Body of pancreas (tissue), 4 donors: ENCODE measurements at regions of chr15 and their contacts with region 1.

Region 1: DNA sequence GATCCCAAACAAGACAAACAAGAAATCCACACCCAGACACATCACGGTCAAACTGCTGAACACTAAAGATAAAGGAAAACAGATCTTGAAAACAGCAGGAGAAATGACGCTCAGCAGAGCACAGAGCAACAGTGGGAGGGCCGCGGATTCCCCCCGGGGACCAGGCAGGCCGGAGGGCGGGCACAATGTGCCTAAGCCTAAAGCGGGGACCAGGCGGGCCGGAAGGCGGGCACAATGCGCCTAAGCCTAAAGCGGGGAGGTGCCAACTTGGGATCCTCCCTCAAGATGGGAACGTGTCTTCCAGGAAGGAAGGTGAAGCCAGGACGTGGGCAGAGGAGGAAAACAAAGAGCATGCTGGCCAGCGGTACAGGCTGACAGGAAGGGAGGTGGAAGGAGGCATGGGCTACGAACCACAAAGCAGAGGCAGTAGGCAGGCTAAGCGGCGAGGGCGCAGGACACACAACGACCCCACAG is 31.1 kb downstream of the CYFIP1 start:
- DNase-seq: no peak
- ATAC-seq: peak; percentile 28
- H3K4me3 ChIP-seq: no peak overlapping the region
- H3K27ac ChIP-seq: peak overlapping the region in 1 of 4 donors; percentile 3
- H3K4me1 ChIP-seq: peaks cover 44% of the 10 kb centered on the region
- H3K27me3 ChIP-seq: no peaks in the 10 kb centered on the region
- CTCF ChIP-seq: no peak
- POLR2A ChIP-seq: no peak

Region 2: GRCh38 chr15:22872936-22873701 is 76.0 kb before region 1 on chr15:
- intact Hi-C with region 1: no loop called
- DNase-seq: no peak
- ATAC-seq: no peak
- H3K4me3 ChIP-seq: no peak overlapping the region
- H3K27ac ChIP-seq: peak overlapping the region in 1 of 4 donors; percentile 23
- H3K4me1 ChIP-seq: no peaks in the 10 kb centered on the region
- H3K27me3 ChIP-seq: no peaks in the 10 kb centered on the region
- CTCF ChIP-seq: no peak
- POLR2A ChIP-seq: no peak

Region 3: GRCh38 chr15:22989576-22990477 is 40.7 kb after region 1 on chr15:
- intact Hi-C with region 1: loop called (anchors 10 kb)
- DNase-seq: peak; percentile 28 to 58 (median 46)
- ATAC-seq: peak; percentile 90
- H3K4me3 ChIP-seq: no peak overlapping the region
- H3K27ac ChIP-seq: peak overlapping the region in 3 of 4 donors; percentile 35 to 48 (median 47)
- H3K4me1 ChIP-seq: peaks cover 14% of the 10 kb centered on the region
- H3K27me3 ChIP-seq: no peaks in the 10 kb centered on the region
- CTCF ChIP-seq: peak in 4 of 7 experiments; percentile 18 to 32 (median 26)
- POLR2A ChIP-seq: no peak

Region 4: GRCh38 chr15:23064156-23064555 is 115.0 kb after region 1 on chr15:
- intact Hi-C with region 1: no loop called
- DNase-seq: no peak
- ATAC-seq: no peak
- H3K4me3 ChIP-seq: no peak overlapping the region
- H3K27ac ChIP-seq: no peak overlapping the region
- H3K4me1 ChIP-seq: no peaks in the 10 kb centered on the region
- H3K27me3 ChIP-seq: no peaks in the 10 kb centered on the region
- CTCF ChIP-seq: no peak
- POLR2A ChIP-seq: no peak